ENCODE measurements at regions of chr10 and their contacts with region 1.

Region 1: GRCh38 chr10:91163269-91163868 is 57.1 kb upstream of the PCGF5 start:
- DNase-seq: peak; percentile 68 to 94 (median 86)
- ATAC-seq: peak; percentile 74
- H3K4me3 ChIP-seq: peak overlapping the region; percentile 74 to 80
- H3K4me3 Mint-ChIP-seq: peak overlapping the region; percentile 93
- H3K27ac ChIP-seq: peak overlapping the region; percentile 91 to 93
- H3K27ac Mint-ChIP-seq: peak overlapping the region; percentile 99
- H3K4me1 ChIP-seq: peaks cover 22% of the 10 kb centered on the region
- H3K4me1 Mint-ChIP-seq: peaks cover 62% of the 10 kb centered on the region
- H3K27me3 ChIP-seq: no peaks in the 10 kb centered on the region
- H3K27me3 Mint-ChIP-seq: no peaks in the 10 kb centered on the region
- CTCF ChIP-seq: no peak

Region 2: GRCh38 chr10:89701238-89702120 is 1461.9 kb before region 1 on chr10 and contains the start of gene KIF20B:
- CTCF ChIA-PET with region 1: no interaction called
- POLR2A ChIA-PET with region 1: no interaction called
- intact Hi-C with region 1: loop called in 1 of 2 experiments (anchors 5 kb)
- DNase-seq: peak; percentile 90 to 97 (median 94)
- ATAC-seq: peak; percentile 95
- H3K4me3 ChIP-seq: peak within 1 kb of the TSS; percentile 85 to 86
- H3K4me3 Mint-ChIP-seq: peak within 1 kb of the TSS; percentile 98
- H3K27ac ChIP-seq: peak within 1 kb of the TSS; percentile 77 to 86
- H3K27ac Mint-ChIP-seq: peak within 1 kb of the TSS; percentile 99
- H3K4me1 ChIP-seq: peaks cover 14% of the 10 kb centered on the region
- H3K4me1 Mint-ChIP-seq: peaks cover 36% of the 10 kb centered on the region
- H3K27me3 ChIP-seq: no peaks in the 10 kb centered on the region
- H3K27me3 Mint-ChIP-seq: no peaks in the 10 kb centered on the region
- CTCF ChIP-seq: peak; percentile 14
- total RNA-seq, gene KIF20B: 23.1 to 26.3 TPM

Region 3: DNA sequence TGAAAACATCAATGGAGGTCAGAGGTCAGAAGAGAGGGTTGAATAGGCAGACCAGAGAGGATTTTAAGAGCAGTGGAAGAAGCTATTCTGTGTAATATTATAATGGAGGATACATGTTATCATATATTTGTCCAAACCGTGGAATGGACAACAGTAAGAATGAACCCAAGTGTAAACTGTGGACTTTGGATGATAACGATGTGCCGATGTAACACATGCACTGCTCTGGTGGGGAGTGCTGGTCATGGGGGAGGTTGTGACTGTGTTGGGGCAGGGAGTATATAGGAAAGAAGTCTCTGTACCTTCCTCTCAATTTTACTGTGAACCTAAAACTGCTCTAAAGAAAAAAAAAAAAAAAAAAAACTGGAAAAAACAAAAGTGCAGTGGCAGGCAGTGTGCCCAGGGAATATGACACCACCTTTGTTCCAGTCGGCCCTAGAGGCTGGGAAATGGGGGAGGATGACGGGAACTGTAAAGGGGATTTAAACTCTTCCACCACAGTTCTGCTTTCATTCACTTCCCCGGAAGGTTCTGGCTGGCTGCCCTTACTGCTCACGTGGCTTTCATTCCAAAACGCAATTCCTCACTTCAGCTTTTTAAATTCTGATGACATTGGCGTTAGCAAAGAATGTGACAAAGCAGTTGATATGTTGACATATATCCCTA is 128.7 kb before region 1 on chr10:
- CTCF ChIA-PET with region 1: interaction called, 3 read pairs
- POLR2A ChIA-PET with region 1: interaction called, 6 read pairs
- intact Hi-C with region 1: loop called in 1 of 2 experiments (anchors 2 kb)
- DNase-seq: no peak
- ATAC-seq: no peak
- H3K4me3 ChIP-seq: no peak overlapping the region
- H3K4me3 Mint-ChIP-seq: peak overlapping the region; percentile 40
- H3K27ac ChIP-seq: peak overlapping the region; percentile 3 to 54
- H3K27ac Mint-ChIP-seq: peak overlapping the region; percentile 83
- H3K4me1 ChIP-seq: peaks cover 17% of the 10 kb centered on the region
- H3K4me1 Mint-ChIP-seq: peaks cover 27% of the 10 kb centered on the region
- H3K27me3 ChIP-seq: no peaks in the 10 kb centered on the region
- H3K27me3 Mint-ChIP-seq: no peaks in the 10 kb centered on the region
- CTCF ChIP-seq: no peak

Region 4: DNA sequence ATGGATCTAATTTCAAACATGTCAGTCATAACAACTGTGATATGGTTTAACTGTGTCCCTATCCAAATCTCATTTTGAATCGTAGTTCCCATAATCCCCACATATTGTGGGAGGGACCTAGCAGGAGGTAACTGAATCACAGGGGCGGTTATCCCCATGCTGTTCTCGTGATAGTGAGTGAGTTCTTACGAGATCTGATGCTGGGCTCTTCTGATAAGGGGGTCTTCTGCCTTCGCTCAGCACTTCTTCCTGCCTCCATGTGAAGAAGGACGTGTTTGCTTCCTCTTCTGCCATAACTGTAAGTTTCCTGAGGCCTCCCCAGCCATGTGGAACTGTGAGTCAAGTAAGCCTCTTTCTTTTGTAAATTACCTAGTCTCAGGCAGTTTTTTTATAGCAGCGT is 80.9 kb before region 1 on chr10:
- CTCF ChIA-PET with region 1: no interaction called
- POLR2A ChIA-PET with region 1: no interaction called
- intact Hi-C with region 1: no loop called
- DNase-seq: no peak
- ATAC-seq: no peak
- H3K4me3 ChIP-seq: no peak overlapping the region
- H3K4me3 Mint-ChIP-seq: no peak overlapping the region
- H3K27ac ChIP-seq: no peak overlapping the region
- H3K27ac Mint-ChIP-seq: no peak overlapping the region
- H3K4me1 ChIP-seq: no peaks in the 10 kb centered on the region
- H3K4me1 Mint-ChIP-seq: no peaks in the 10 kb centered on the region
- H3K27me3 ChIP-seq: no peaks in the 10 kb centered on the region
- H3K27me3 Mint-ChIP-seq: no peaks in the 10 kb centered on the region
- CTCF ChIP-seq: no peak

Region 5: GRCh38 chr10:91123246-91123645 is 40.1 kb before region 1 on chr10:
- CTCF ChIA-PET with region 1: no interaction called
- POLR2A ChIA-PET with region 1: no interaction called
- intact Hi-C with region 1: no loop called
- DNase-seq: no peak
- ATAC-seq: no peak
- H3K4me3 ChIP-seq: no peak overlapping the region
- H3K4me3 Mint-ChIP-seq: no peak overlapping the region
- H3K27ac ChIP-seq: no peak overlapping the region
- H3K27ac Mint-ChIP-seq: no peak overlapping the region
- H3K4me1 ChIP-seq: no peaks in the 10 kb centered on the region
- H3K4me1 Mint-ChIP-seq: peaks cover 4% of the 10 kb centered on the region
- H3K27me3 ChIP-seq: no peaks in the 10 kb centered on the region
- H3K27me3 Mint-ChIP-seq: no peaks in the 10 kb centered on the region
- CTCF ChIP-seq: no peak

Region 6: DNA sequence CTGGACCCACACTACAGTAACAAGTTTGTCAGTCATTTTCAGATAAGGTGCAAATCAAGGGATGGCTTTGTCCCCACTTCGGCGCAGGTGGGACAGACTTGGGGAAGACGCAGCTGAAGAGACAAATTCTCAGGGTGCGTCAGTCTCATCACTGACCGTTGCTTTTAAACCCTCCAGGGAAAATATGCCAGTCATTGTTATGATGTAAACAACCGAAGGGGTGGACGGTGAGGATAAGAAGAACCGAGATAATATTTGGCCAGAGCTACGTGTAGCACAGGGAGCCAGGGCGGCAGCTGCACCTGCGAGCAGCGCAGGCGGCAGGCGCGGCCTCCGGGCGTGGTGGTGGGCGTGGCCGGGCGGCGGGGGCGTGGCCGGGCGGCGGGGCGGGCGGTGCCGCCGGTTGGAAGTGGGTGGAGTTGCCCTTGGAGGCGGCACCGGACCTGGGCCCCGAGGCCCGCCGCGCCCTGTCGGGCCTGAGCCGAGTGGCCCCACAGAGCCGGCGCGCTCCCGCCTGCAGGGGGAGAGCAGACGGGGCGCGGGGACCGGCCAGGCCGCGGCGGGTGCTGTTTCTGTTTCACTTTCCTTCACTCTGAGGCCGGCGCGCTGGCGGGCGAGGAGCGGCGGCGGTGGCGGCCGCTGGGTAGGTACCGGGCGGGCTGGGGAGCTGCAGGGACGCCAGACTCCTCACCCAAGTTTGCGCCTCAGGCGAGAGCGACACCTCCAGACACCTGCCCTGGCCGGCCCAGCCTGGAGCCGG is 57.0 kb after region 1 on chr10 and contains the start of gene PCGF5:
- CTCF ChIA-PET with region 1: interaction called, 8 read pairs
- POLR2A ChIA-PET with region 1: interaction called, 45 read pairs
- intact Hi-C with region 1: loop called (anchors 1 kb)
- DNase-seq: peak; percentile 87 to 97 (median 91)
- ATAC-seq: peak; percentile 94
- H3K4me3 ChIP-seq: peak within 1 kb of the TSS; percentile 66 to 80
- H3K4me3 Mint-ChIP-seq: peak within 1 kb of the TSS; percentile 89
- H3K27ac ChIP-seq: peak within 1 kb of the TSS; percentile 74 to 76
- H3K27ac Mint-ChIP-seq: peak within 1 kb of the TSS; percentile 91
- H3K4me1 ChIP-seq: peaks cover 32% of the 10 kb centered on the region
- H3K4me1 Mint-ChIP-seq: peaks cover 51% of the 10 kb centered on the region
- H3K27me3 ChIP-seq: no peaks in the 10 kb centered on the region
- H3K27me3 Mint-ChIP-seq: no peaks in the 10 kb centered on the region
- CTCF ChIP-seq: no peak
- total RNA-seq, gene PCGF5: 67.5 to 70.7 TPM

Region 7: DNA sequence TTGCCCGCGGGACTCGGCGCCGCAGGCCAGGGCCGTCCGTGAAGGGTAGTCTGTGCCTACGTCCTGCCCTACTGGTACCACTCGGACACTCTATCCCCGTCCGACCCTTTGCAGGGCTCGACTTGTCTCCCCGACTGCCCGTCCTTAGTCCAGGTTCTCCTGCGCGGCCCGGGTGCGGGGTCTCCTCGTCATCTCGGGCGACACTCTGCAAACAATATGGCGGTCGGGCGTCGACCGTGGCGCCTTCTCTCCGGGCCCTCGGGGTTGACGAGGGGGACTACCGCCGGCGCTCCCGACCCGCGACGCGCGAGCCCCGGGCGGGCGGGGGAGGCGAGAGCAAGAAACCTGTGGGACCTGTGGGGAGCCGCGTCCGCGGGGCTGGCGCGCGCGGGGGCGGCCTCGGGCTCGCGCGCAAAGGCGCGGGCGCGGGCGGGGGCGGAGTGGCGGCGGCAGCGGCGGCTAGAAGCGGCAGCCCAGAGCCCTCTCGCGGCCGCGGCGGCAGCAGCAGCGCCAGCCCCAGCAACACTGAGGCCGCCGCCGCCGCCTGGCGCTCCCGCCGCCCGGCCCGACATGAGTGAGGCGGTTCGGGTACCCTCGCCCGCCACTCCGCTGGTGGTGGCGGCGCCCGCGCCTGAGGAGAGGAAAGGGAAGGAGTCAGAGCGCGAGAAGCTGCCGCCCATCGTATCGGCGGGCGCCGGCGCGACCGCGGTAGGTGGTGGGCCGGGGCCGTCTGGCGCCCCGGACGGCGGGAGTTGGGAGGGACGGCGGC is 246.7 kb after region 1 on chr10 and contains the start of gene HECTD2:
- CTCF ChIA-PET with region 1: interaction called, 3 read pairs
- POLR2A ChIA-PET with region 1: interaction called, 3 read pairs
- intact Hi-C with region 1: loop called (anchors 1 to 2 kb)
- DNase-seq: peak; percentile 65 to 92 (median 82)
- ATAC-seq: peak; percentile 86
- H3K4me3 ChIP-seq: peak within 1 kb of the TSS; percentile 91 to 97
- H3K4me3 Mint-ChIP-seq: peak within 1 kb of the TSS; percentile 86
- H3K27ac ChIP-seq: peak within 1 kb of the TSS; percentile 90 to 95
- H3K27ac Mint-ChIP-seq: peak within 1 kb of the TSS; percentile 90
- H3K4me1 ChIP-seq: peaks cover 12% of the 10 kb centered on the region
- H3K4me1 Mint-ChIP-seq: peaks cover 13% of the 10 kb centered on the region
- H3K27me3 ChIP-seq: no peaks in the 10 kb centered on the region
- H3K27me3 Mint-ChIP-seq: no peaks in the 10 kb centered on the region
- CTCF ChIP-seq: peak; percentile 41
- total RNA-seq, gene HECTD2: 0.69 to 1.5 TPM

Region 8: GRCh38 chr10:91932737-91933136 is 769.4 kb after region 1 on chr10:
- CTCF ChIA-PET with region 1: no interaction called
- POLR2A ChIA-PET with region 1: no interaction called
- intact Hi-C with region 1: loop called in 1 of 2 experiments (anchors 10 kb)
- DNase-seq: no peak
- ATAC-seq: no peak
- H3K4me3 ChIP-seq: no peak overlapping the region
- H3K4me3 Mint-ChIP-seq: no peak overlapping the region
- H3K27ac ChIP-seq: no peak overlapping the region
- H3K27ac Mint-ChIP-seq: no peak overlapping the region
- H3K4me1 ChIP-seq: peaks cover 30% of the 10 kb centered on the region
- H3K4me1 Mint-ChIP-seq: peaks cover 70% of the 10 kb centered on the region
- H3K27me3 ChIP-seq: no peaks in the 10 kb centered on the region
- H3K27me3 Mint-ChIP-seq: no peaks in the 10 kb centered on the region
- CTCF ChIP-seq: no peak